ENCODE measurements at regions of chr6 and their contacts with region 1.

Region 1: GRCh38 chr6:167920165-167920564 is 77.3 kb upstream of the KIF25 start:
- DNase-seq: peak in 1 of 10 donors; percentile 44
- H3K4me3 ChIP-seq: no peak overlapping the region
- H3K27ac ChIP-seq: peak overlapping the region in 16 of 59 donors; percentile 1 to 63 (median 24)
- H3K27me3 ChIP-seq: no peaks in the 10 kb centered on the region
- CTCF ChIP-seq: no peak

Region 2: GRCh38 chr6:167962711-167963110 is 42.5 kb after region 1 on chr6:
- intact Hi-C with region 1: loop called in 1 of 2 experiments (anchors 5 kb)
- DNase-seq: no peak
- H3K4me3 ChIP-seq: no peak overlapping the region
- H3K27ac ChIP-seq: peak overlapping the region in 3 of 59 donors; percentile 4 to 25 (median 6)
- H3K27me3 ChIP-seq: no peaks in the 10 kb centered on the region
- CTCF ChIP-seq: no peak

Region 3: GRCh38 chr6:167996424-167997199 is 76.4 kb after region 1 on chr6:
- intact Hi-C with region 1: no loop called
- DNase-seq: peak in 1 of 10 donors; percentile 69
- H3K4me3 ChIP-seq: peak overlapping the region in 3 of 59 donors; percentile 11 to 39 (median 35)
- H3K27ac ChIP-seq: peak overlapping the region in 9 of 59 donors; percentile 4 to 82 (median 59)
- H3K27me3 ChIP-seq: peaks cover 0 to 7% (median 0%) of the 10 kb centered on the region in 45 donors
- CTCF ChIP-seq: peak in 5 of 56 donors; percentile 8 to 33 (median 17)

Region 4: GRCh38 chr6:168045141-168045691 is 125.1 kb after region 1 on chr6:
- intact Hi-C with region 1: loop called (anchors 5 kb)
- DNase-seq: peak in 2 of 10 donors; percentile 20 to 37
- H3K4me3 ChIP-seq: no peak overlapping the region
- H3K27ac ChIP-seq: peak overlapping the region in 6 of 59 donors; percentile 10 to 53 (median 20)
- H3K27me3 ChIP-seq: no peaks in the 10 kb centered on the region
- CTCF ChIP-seq: peak in 1 of 56 donors; percentile 5

Measured in dorsolateral prefrontal cortex (tissue), 120 donors.